ENCODE measurements at regions of chr2 and their contacts with region 1.

Region 1: DNA sequence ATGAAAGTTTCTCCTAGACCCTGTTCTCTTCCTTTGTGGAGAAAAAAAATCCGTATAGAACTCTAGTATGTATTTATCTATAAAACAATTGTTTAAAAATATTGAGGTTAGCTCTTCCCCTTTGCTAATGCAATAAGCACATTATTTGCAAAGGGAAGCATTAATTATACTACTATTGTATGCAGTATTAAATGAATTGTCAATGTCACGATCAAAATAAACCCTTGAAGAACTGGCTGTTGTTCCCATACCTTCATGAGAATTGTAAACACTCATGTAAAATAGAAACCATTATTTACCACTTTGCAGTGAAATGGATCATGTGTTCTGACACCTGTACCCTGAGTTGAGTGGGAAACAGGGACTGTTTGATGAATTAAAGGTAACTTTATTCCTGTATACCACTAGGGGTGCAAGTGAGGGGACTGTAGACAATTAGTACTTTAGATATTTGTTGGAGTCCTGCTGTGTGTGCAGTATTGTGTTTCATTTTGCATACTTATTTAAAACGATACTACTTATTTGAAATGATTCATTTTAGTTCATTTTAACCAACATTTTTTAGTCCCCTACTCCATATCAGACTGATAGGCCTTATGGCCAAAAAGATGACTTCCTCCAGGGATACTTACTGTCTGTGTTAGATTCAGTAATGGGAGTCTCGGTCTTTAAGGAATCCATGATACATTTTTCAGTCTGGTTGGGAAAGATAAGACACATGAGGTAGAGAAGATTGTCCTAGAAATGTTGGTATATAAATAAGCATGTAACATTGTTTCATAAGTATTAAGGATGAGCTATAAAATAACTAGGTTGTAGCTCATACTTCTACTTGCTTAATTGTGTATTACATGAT is 7.9 kb downstream of the PKP4 start:
- DNase-seq: no peak
- H3K4me3 ChIP-seq: no peak overlapping the region
- CTCF ChIP-seq: peak; percentile 19

Region 2: DNA sequence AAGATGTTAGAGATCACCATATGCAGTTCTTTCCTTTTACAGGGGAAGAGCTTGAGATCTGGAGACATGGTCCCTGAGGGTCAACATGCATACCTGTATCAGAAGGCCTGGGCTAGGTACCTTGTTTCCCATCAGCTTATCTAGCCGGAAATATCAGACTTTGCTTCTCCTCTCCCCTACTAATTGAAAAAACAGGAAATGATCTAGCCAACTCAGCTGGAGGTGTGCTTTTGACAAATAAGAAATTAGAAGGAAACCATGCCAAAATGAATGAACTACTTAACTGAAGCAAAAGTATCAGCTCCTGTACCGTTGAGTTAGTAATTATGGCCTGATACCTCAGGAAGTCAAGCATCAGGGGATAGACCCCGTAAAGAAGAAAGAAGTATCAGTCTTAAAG is 12.5 kb after region 1 on chr2:
- CTCF ChIA-PET with region 1: interaction called, 11 read pairs
- POLR2A ChIA-PET with region 1: no interaction called
- DNase-seq: no peak
- H3K4me3 ChIP-seq: no peak overlapping the region
- CTCF ChIP-seq: no peak